ENCODE measurements at regions of chr17 and their contacts with region 1.

Region 1: GRCh38 chr17:28812091-28812747 is 30.4 kb downstream of the FAM222B start:
- DNase-seq: peak; percentile 99
- H3K4me3 ChIP-seq: peak overlapping the region; percentile 63 to 97 (median 76)
- H3K27ac ChIP-seq: peak overlapping the region; percentile 87 to 95 (median 88)
- H3K4me1 ChIP-seq: peaks cover 0 to 46% (median 40%) of the 10 kb centered on the region in 4 donors
- H3K27me3 ChIP-seq: no peaks in the 10 kb centered on the region
- CTCF ChIP-seq: no peak
- EP300 ChIP-seq: no peak
- POLR2A ChIP-seq: peak in 1 of 2 donors; percentile 19

Region 2: DNA sequence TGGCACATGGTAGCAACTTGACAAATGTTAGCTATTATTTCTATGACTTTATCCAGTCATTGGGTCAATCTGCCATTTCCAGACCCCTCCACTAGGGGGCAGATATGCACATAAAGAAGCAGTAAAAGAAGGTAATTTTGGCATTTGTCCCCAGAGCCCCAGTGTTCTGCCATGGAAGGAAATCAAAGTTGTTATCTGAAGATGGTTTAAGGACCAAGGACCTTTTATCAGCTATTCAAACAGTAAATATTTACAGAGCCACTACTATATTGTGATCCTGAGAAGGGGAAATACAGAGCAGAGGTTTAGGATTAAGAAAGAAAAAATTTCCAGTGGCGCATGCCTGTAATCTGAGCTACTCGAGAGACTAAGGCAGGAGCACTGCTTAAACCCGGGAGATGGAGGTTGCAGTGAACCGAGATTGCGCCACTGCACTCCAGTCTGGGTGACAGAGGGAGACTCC is 48.4 kb before region 1 on chr17:
- intact Hi-C with region 1: loop called (anchors 5 kb)
- DNase-seq: peak; percentile 88
- H3K4me3 ChIP-seq: no peak overlapping the region
- H3K27ac ChIP-seq: peak overlapping the region in 1 of 4 donors; percentile 27
- H3K4me1 ChIP-seq: peaks cover 0 to 18% (median 6%) of the 10 kb centered on the region in 4 donors
- H3K27me3 ChIP-seq: no peaks in the 10 kb centered on the region
- CTCF ChIP-seq: peak; percentile 65 to 86 (median 84)
- EP300 ChIP-seq: no peak
- POLR2A ChIP-seq: no peak

Region 3: GRCh38 chr17:28842282-28843012 is 30.2 kb after region 1 on chr17 and contains the start of gene FAM222B:
- intact Hi-C with region 1: loop called (anchors 5 kb)
- DNase-seq: peak; percentile 88
- H3K4me3 ChIP-seq: peak within 1 kb of the TSS; percentile 74 to 90 (median 84)
- H3K27ac ChIP-seq: peak within 1 kb of the TSS; percentile 80 to 90 (median 86)
- H3K4me1 ChIP-seq: peaks cover 0 to 26% (median 8%) of the 10 kb centered on the region in 4 donors
- H3K27me3 ChIP-seq: no peaks in the 10 kb centered on the region
- CTCF ChIP-seq: peak in 1 of 4 experiments; percentile 23
- EP300 ChIP-seq: no peak
- POLR2A ChIP-seq: peak; percentile 67 to 70
- total RNA-seq, gene FAM222B: 5.0 to 11.9 (median 7.2) TPM

Region 4: GRCh38 chr17:28854457-28855350 is 42.5 kb after region 1 on chr17 and contains the start of gene ERAL1:
- intact Hi-C with region 1: loop called (anchors 5 kb)
- DNase-seq: peak; percentile 93
- H3K4me3 ChIP-seq: peak within 1 kb of the TSS; percentile 45 to 90 (median 76)
- H3K27ac ChIP-seq: peak within 1 kb of the TSS; percentile 64 to 82 (median 82)
- H3K4me1 ChIP-seq: peaks cover 0 to 14% (median 10%) of the 10 kb centered on the region in 4 donors
- H3K27me3 ChIP-seq: no peaks in the 10 kb centered on the region
- CTCF ChIP-seq: no peak
- EP300 ChIP-seq: no peak
- POLR2A ChIP-seq: peak; percentile 41 to 58
- total RNA-seq, gene ERAL1: 20.2 to 41.9 (median 30.3) TPM

Region 5: GRCh38 chr17:28896884-28897768 is 84.9 kb after region 1 on chr17 and contains the start of gene FLOT2:
- intact Hi-C with region 1: loop called (anchors 2 kb)
- DNase-seq: peak; percentile 87
- H3K4me3 ChIP-seq: peak within 1 kb of the TSS; percentile 69 to 93 (median 83)
- H3K27ac ChIP-seq: peak within 1 kb of the TSS; percentile 82 to 96 (median 92)
- H3K4me1 ChIP-seq: peaks cover 0 to 35% (median 29%) of the 10 kb centered on the region in 4 donors
- H3K27me3 ChIP-seq: no peaks in the 10 kb centered on the region
- CTCF ChIP-seq: peak in 3 of 4 experiments; percentile 12 to 34 (median 27)
- EP300 ChIP-seq: peak in 2 of 4 donors; percentile 10 to 61
- POLR2A ChIP-seq: no peak
- total RNA-seq, gene FLOT2: 38.5 to 72.5 (median 52.4) TPM

Region 6: DNA sequence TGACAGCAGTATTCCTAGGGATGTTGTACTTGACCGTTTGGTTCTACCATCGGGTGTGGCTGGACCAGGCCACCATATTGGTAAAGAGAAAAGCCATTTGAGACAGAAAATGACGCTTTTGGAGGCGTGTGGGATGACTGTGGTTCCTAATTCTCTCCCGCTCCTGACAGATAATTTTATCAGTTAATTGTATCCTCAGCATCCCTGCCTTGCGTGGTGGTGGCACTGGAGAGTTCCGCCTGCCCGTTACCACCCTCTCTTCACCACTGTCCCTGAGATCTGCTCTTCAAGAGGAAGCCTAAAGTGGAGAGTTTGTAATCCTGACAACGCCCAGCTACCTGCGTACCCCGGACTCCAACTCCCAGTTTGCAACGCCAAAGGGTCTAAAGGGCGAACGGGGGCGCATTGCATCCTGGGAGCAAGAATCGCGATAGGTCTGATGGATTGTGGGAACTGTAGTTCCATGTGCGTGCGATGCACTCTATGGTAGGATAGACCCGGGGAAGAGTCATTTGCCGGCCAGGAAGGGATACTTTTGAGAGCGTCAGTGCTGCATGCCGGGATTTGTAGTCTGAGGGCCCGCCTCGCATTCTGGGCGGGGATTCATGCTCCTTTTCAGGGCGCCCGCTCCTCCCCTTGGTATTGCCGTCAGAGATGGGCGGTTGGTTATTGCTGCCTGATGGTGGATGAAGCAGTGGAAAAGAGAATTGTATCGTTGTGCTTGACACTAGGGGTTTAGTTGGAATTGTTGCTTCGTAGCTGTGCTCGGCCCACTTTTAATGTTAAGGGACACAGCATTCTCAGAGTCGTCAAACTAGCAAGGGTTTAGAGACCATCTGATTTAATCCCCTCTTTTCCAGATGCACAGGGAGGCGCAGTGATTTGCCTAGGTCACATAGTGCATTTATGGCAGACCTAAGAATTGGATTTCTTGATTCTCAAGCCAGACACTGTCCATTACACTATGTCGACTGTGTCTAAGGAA is 140.1 kb after region 1 on chr17:
- intact Hi-C with region 1: loop called (anchors 5 kb)
- DNase-seq: peak; percentile 99
- H3K4me3 ChIP-seq: peak overlapping the region; percentile 40 to 96 (median 74)
- H3K27ac ChIP-seq: peak overlapping the region; percentile 90 to 97 (median 94)
- H3K4me1 ChIP-seq: peaks cover 0 to 27% (median 14%) of the 10 kb centered on the region in 4 donors
- H3K27me3 ChIP-seq: no peaks in the 10 kb centered on the region
- CTCF ChIP-seq: no peak
- EP300 ChIP-seq: peak in 1 of 4 donors; percentile 52
- POLR2A ChIP-seq: peak in 1 of 2 donors; percentile 4